Dendritic cell treated with granulocyte-macrophage colony-stimulating factor and Interleukin-4, amounts not matched to agents 40 ng/mL and 50 ng/mL, for 4 days (primary cell): ENCODE measurements at regions of chr4 and their contacts with region 1.

Region 1: GRCh38 chr4:76208005-76208765 is 5.4 kb downstream of the SCARB2 start:
- H3K4me3 Mint-ChIP-seq: peak overlapping the region; percentile 55
- H3K27ac Mint-ChIP-seq: peak overlapping the region; percentile 71
- H3K4me1 Mint-ChIP-seq: peaks cover 52% of the 10 kb centered on the region
- H3K27me3 Mint-ChIP-seq: no peaks in the 10 kb centered on the region

Region 2: GRCh38 chr4:76305971-76306881 is 98.0 kb after region 1 on chr4 and contains the start of gene STBD1:
- intact Hi-C with region 1: loop called (anchors 5 kb)
- H3K4me3 Mint-ChIP-seq: peak within 1 kb of the TSS; percentile 91
- H3K27ac Mint-ChIP-seq: peak within 1 kb of the TSS; percentile 85
- H3K4me1 Mint-ChIP-seq: peaks cover 50% of the 10 kb centered on the region
- H3K27me3 Mint-ChIP-seq: peaks cover 5% of the 10 kb centered on the region